ENCODE measurements at regions of chr6 and their contacts with region 1.

Region 1: GRCh38 chr6:52020945-52021570 is 66.4 kb downstream of the PKHD1 start:
- DNase-seq: no peak
- ATAC-seq: no peak

Region 2: GRCh38 chr6:51855310-51856082 is 165.6 kb before region 1 on chr6:
- intact Hi-C with region 1: loop called in 1 of 2 experiments (anchors 10 kb)
- DNase-seq: no peak
- ATAC-seq: no peak

Region 3: GRCh38 chr6:52233975-52234823 is 213.1 kb after region 1 on chr6:
- intact Hi-C with region 1: no loop called
- DNase-seq: no peak
- ATAC-seq: no peak

Measured in left cardiac atrium (tissue), 4 donors.